HEK293 (cell line): ENCODE measurements at regions of chr12 and their contacts with region 1.

Region 1: GRCh38 chr12:49866859-49867579 is 24.1 kb upstream of the BCDIN3D start:
- H3K4me3 ChIP-seq: no peak overlapping the region
- H3K27ac ChIP-seq: no peak overlapping the region
- H3K4me1 ChIP-seq: peaks cover 14% of the 10 kb centered on the region
- CTCF ChIP-seq: peak; percentile 88

Region 2: GRCh38 chr12:49687941-49688340 is 179.1 kb before region 1 on chr12:
- CTCF ChIA-PET with region 1: no interaction called
- POLR2A ChIA-PET with region 1: no interaction called
- H3K4me3 ChIP-seq: no peak overlapping the region
- H3K27ac ChIP-seq: no peak overlapping the region
- H3K4me1 ChIP-seq: peaks cover 11% of the 10 kb centered on the region
- CTCF ChIP-seq: peak; percentile 71

Region 3: GRCh38 chr12:49776413-49776812 is 90.6 kb before region 1 on chr12:
- CTCF ChIA-PET with region 1: interaction called, 12 read pairs
- POLR2A ChIA-PET with region 1: no interaction called
- H3K4me3 ChIP-seq: no peak overlapping the region
- H3K27ac ChIP-seq: no peak overlapping the region
- H3K4me1 ChIP-seq: no peaks in the 10 kb centered on the region
- CTCF ChIP-seq: peak; percentile 97

Region 4: GRCh38 chr12:49888461-49889151 is 21.6 kb after region 1 on chr12:
- CTCF ChIA-PET with region 1: interaction called, 27 read pairs
- POLR2A ChIA-PET with region 1: interaction called, 3 read pairs
- H3K4me3 ChIP-seq: no peak overlapping the region
- H3K27ac ChIP-seq: no peak overlapping the region
- H3K4me1 ChIP-seq: 0 out of 2 replicates have a peak, but pooled peaks cover 4% of the 10 kb centered on the region
- CTCF ChIP-seq: no peak

Region 5: GRCh38 chr12:49930515-49931288 is 63.7 kb after region 1 on chr12:
- CTCF ChIA-PET with region 1: interaction called, 11 read pairs
- POLR2A ChIA-PET with region 1: no interaction called
- H3K4me3 ChIP-seq: no peak overlapping the region
- H3K27ac ChIP-seq: no peak overlapping the region
- H3K4me1 ChIP-seq: no peaks in the 10 kb centered on the region
- CTCF ChIP-seq: no peak

Region 6: DNA sequence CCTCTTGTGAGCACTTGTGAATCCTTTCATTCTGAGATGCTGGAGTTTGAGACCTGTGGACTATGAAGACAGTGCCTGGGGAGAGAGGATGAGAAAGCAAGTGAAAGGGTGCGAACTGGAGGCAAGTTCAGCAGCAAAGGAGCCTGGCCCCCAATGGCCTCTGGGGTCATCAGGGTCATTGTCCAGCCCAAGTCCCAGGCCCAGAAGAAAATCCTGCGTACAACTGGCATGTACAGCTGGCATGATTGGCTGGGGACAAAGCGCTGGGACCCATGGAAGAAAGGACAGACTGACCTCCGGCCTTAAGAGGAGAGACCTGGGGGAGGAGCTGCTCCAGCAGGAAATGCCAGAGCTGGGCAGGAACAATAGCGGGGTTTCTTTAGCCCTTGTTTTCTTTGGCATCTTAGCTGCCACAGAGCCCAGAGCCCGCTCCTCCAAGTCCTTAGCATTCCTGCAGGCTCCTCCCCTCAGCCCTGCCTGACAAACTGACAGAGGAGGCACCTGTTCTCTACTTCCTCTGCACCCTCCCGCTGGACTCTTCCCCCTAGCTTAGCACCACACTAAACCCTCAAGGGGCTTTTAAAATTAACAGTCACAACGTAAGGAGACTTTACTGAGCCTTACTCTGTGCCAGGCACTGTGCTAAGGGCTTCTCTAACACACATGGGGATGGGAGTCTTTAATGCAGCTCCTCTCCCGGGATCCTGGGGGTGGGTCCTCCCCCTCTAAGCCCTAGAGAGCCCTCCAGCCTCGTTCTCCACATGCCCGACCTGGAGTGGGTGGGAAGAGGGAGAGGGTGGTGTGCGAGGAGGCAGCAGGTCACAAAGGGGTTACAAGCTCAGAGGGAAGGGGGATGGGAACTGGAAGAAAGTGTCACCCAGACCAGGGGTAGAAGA is 92.8 kb after region 1 on chr12:
- CTCF ChIA-PET with region 1: interaction called, 99 read pairs
- POLR2A ChIA-PET with region 1: no interaction called
- H3K4me3 ChIP-seq: no peak overlapping the region
- H3K27ac ChIP-seq: no peak overlapping the region
- H3K4me1 ChIP-seq: 0 out of 2 replicates have a peak, but pooled peaks cover 5% of the 10 kb centered on the region
- CTCF ChIP-seq: no peak

Region 7: DNA sequence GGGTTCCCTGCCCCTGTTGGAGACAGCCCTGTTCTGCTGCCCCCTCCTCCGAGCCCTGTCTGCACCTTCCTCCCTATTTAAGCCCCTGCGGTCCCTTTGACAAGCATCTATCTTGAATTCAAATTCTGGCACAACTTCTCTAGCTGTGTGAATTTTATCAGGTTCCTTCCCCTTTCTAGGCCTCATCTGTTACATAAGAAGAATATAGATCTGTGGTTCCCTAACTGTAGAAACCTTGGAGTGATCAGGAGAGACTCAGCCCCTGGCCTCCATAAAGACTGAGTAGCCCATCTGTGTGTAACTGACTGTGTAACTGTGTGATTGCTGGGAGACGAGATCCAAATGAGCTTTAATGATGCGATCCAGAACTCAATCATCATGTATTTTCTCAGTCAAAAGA is 171.3 kb after region 1 on chr12:
- CTCF ChIA-PET with region 1: interaction called, 15 read pairs
- POLR2A ChIA-PET with region 1: no interaction called
- H3K4me3 ChIP-seq: no peak overlapping the region
- H3K27ac ChIP-seq: no peak overlapping the region
- H3K4me1 ChIP-seq: no peaks in the 10 kb centered on the region
- CTCF ChIP-seq: no peak

Region 8: DNA sequence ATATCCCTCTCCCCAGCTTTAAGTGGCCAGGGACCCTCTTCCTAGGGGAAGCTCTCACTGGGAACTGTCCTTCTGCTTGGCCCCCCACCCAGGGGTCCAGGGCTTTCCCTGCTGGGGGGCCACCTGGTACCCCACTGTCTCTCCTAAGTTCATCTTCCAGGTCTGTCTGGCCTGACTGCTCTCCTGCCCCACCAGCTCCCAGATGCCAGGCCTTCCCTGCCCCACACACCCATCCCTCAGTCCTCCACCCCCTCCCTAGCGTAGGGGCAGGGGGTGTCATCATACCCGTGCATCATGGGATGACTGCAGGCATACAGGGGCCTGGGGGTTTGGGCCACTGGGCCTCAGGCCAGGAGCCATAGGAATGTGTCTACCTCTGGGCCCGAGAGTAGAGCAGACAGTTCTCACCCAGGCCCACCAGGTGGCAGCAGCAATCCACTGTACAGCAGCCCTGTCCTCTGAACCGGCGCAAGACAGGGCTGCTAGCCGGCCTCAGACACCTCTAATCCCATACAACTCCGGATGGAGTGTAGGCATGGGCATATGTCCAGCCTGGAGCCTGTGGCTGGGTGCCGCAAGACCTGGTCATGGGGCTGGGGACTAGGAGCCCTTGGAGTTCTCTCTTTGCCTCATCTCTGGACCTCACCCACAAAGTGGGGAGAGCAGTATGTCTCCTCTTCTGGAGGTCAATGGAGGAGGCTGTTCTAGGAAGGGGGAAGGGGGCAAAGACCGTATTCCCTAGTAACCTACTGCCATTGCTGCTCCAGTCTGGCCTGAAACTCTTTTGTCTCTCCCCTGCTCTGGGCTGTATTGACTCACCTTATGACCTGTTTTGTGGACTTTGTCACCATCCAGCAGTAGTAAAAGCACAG is 208.2 kb after region 1 on chr12:
- CTCF ChIA-PET with region 1: interaction called, 75 read pairs
- POLR2A ChIA-PET with region 1: interaction called, 5 read pairs
- H3K4me3 ChIP-seq: no peak overlapping the region
- H3K27ac ChIP-seq: no peak overlapping the region
- H3K4me1 ChIP-seq: no peaks in the 10 kb centered on the region
- CTCF ChIP-seq: peak; percentile 95